ENCODE measurements at regions of chr7 and their contacts with region 1.

Region 1: DNA sequence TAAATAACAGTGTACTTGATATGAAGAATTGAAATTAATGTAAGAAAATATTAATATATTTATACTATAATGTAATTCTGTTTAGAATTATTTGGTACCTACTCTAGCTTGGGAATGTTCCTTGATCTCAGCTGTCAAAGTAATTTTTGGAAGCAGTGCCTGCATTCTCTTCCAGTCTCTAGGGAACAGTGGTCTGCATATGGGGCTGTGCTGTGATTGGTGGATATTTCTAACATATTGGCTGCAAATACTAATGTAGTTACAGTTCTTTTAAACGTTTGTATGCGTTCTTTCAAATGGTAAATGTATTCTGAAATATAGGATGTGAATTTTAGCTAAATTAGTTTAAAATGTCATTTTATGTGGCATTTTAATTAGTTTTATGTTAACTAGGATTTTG is 87.2 kb downstream of the PHF14 start:
- DNase-seq: no peak
- H3K4me3 ChIP-seq: no peak overlapping the region
- H3K27ac ChIP-seq: no peak overlapping the region
- H3K4me1 ChIP-seq: no peaks in the 10 kb centered on the region
- CTCF ChIP-seq: no peak

Region 2: GRCh38 chr7:11035661-11036060 is 25.2 kb before region 1 on chr7:
- CTCF ChIA-PET with region 1: no interaction called
- POLR2A ChIA-PET with region 1: interaction called, 10 read pairs
- intact Hi-C with region 1: no loop called
- DNase-seq: no peak
- H3K4me3 ChIP-seq: no peak overlapping the region
- H3K27ac ChIP-seq: no peak overlapping the region
- H3K4me1 ChIP-seq: no peaks in the 10 kb centered on the region
- CTCF ChIP-seq: no peak

Measured in OCI-LY7 (cell line).